Activated naive CD4-positive, alpha-beta T cell treated with anti-CD3 and anti-CD28 coated beads for 36 hours (primary cell): ENCODE measurements at regions of chr10 and their contacts with region 1.

Region 1: GRCh38 chr10:33248638-33249037 is 85.8 kb downstream of the NRP1 start:
- DNase-seq: peak; percentile 49
- H3K4me3 Mint-ChIP-seq: no peak overlapping the region
- H3K27ac Mint-ChIP-seq: no peak overlapping the region
- H3K4me1 Mint-ChIP-seq: peaks cover 75% of the 10 kb centered on the region
- H3K27me3 Mint-ChIP-seq: no peaks in the 10 kb centered on the region

Region 2: DNA sequence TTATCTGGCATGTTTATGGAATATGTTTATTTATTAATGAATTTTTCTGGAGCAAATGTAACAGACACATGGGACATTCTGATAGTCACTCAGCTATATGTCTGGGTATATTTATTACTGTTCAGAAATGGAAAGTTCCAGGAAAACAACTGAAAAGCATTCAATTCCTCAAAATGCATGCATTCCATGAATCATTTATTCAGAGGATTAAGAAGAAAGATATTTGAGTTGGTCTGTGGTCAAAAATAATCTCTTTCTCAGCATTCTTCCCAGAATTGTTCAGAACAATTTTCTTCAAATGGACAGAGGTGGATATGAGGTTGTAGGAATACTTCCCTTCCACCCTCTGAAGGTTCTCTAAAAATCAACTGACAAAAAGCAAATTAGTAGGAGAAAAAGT is 193.0 kb before region 1 on chr10:
- CTCF ChIA-PET with region 1: no interaction called
- intact Hi-C with region 1: no loop called
- DNase-seq: no peak
- H3K4me3 Mint-ChIP-seq: no peak overlapping the region
- H3K27ac Mint-ChIP-seq: no peak overlapping the region
- H3K4me1 Mint-ChIP-seq: peaks cover 4% of the 10 kb centered on the region
- H3K27me3 Mint-ChIP-seq: peaks cover 5% of the 10 kb centered on the region

Region 3: GRCh38 chr10:33115738-33116719 is 132.6 kb before region 1 on chr10:
- CTCF ChIA-PET with region 1: no interaction called
- intact Hi-C with region 1: loop called (anchors 1 kb)
- DNase-seq: no peak
- H3K4me3 Mint-ChIP-seq: no peak overlapping the region
- H3K27ac Mint-ChIP-seq: no peak overlapping the region
- H3K4me1 Mint-ChIP-seq: peaks cover 60% of the 10 kb centered on the region
- H3K27me3 Mint-ChIP-seq: no peaks in the 10 kb centered on the region

Region 4: GRCh38 chr10:33211106-33211878 is 37.3 kb before region 1 on chr10:
- CTCF ChIA-PET with region 1: no interaction called
- intact Hi-C with region 1: loop called (anchors 1 kb)
- DNase-seq: peak; percentile 65
- H3K4me3 Mint-ChIP-seq: no peak overlapping the region
- H3K27ac Mint-ChIP-seq: peak overlapping the region; percentile 55
- H3K4me1 Mint-ChIP-seq: peaks cover 20% of the 10 kb centered on the region
- H3K27me3 Mint-ChIP-seq: no peaks in the 10 kb centered on the region

Region 5: GRCh38 chr10:33265621-33266020 is 17.0 kb after region 1 on chr10:
- CTCF ChIA-PET with region 1: no interaction called
- intact Hi-C with region 1: loop called (anchors 1 kb)
- DNase-seq: peak; percentile 84
- H3K4me3 Mint-ChIP-seq: no peak overlapping the region
- H3K27ac Mint-ChIP-seq: no peak overlapping the region
- H3K4me1 Mint-ChIP-seq: peaks cover 24% of the 10 kb centered on the region
- H3K27me3 Mint-ChIP-seq: peaks cover 17% of the 10 kb centered on the region

Region 6: DNA sequence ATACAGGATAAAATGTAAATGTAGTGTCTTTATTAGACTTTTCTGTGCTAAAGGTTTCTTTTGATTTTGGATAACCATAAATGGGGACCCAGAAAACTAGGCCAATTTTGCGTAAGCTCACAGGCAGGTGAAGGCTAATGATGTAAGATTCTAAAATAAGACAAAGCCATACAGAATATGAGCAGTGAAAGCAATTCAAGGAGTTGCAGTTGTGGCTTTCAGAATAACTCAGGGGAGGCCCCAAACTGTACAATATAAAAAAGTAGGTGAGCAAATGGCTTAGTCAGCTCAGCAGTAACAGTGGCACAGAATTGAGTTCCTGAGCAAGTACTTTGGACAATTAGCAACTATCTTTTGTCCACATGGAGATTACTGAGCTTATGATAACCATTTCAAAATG is 167.6 kb after region 1 on chr10:
- CTCF ChIA-PET with region 1: no interaction called
- intact Hi-C with region 1: loop called (anchors 2 kb)
- DNase-seq: peak; percentile 14
- H3K4me3 Mint-ChIP-seq: no peak overlapping the region
- H3K27ac Mint-ChIP-seq: no peak overlapping the region
- H3K4me1 Mint-ChIP-seq: no peaks in the 10 kb centered on the region
- H3K27me3 Mint-ChIP-seq: peaks cover 32% of the 10 kb centered on the region

Region 7: DNA sequence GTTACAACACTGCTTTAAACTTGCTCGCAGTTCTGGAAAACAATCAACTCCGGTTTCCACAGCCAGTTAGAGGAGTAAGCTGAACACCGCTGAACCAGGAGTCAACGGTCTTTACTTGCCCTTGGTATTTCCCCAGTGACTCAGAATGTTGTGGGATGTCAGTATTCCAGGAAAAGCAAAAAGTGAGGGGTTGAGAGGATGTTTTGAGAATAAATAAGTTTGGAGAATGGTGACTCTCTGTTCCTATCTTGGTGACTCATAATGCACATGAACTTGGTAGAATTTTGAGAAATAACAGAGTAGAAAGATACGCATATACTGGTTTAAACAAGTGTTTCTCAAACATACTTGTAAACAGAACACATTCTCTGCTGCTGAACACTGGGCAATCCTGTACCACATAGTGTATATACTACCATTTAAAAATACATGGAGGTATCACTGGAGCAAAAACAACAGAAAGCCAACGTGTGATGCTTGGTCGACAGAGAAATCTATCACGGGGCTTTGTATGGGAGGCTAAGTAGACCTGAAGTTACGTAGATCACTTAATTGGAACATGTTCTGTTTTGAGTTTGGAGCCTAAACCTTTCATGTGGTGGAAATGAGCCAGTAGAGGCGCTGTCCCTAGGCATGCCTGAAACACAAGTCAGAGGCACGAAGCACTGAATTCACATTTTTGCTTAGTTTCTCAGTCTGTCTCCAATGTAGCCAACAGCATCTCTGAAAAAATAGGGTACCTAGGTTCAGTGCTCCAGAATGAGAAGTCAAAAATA is 1032.1 kb after region 1 on chr10:
- CTCF ChIA-PET with region 1: no interaction called
- intact Hi-C with region 1: loop called (anchors 5 kb)
- DNase-seq: peak; percentile 23
- H3K4me3 Mint-ChIP-seq: no peak overlapping the region
- H3K27ac Mint-ChIP-seq: peak overlapping the region; percentile 68
- H3K4me1 Mint-ChIP-seq: peaks cover 30% of the 10 kb centered on the region
- H3K27me3 Mint-ChIP-seq: peaks cover 6% of the 10 kb centered on the region